Activated T-helper 2 cell treated with anti-CD3 and anti-CD28 coated beads, Interferon-gamma antibody, Interleukin-2, Interleukin-4, amounts not matched to agents 10 μg/mL and 5 μg/mL and 100 μg/mL, durations not matched to agents 14 hours and 24 hours and 36 hours (primary cell): ENCODE measurements at regions of chr10 and their contacts with region 1.

Region 1: DNA sequence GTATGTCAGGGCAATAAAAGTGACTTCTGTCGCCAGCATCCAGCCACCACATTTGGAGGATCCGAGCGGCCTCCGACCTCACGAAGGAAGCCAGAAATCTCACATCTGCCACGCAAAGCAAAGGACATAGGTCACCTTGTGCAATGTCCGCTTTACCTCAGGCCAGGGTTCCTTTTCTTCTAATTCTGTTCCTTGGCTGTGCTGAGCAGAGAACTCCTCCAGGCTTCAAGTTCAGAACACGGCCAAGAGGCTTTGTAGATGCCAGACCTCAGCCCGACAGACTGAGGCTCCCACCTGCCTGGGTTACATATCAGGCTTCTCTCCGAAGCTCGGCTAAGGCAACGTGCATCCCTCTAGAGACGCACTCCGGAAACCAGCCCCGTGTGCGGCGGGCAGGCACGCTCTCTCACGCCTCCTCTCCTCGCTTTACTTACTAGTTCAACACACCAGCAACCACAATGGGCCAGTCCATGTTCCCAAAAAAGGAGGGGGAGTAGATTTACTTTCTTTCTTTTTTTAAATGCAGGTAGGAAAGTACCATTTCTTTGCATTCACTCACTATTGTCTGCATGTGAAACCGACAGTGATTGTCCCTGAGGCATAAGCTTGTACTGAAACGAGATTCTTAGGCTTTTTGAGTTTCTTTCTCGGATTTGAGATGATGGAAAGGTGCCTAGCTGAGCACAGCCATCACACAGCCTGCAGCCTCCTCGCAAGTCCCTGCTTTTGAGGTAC is 122.4 kb upstream of the AFAP1L2 start:
- DNase-seq: peak; percentile 88
- H3K4me3 Mint-ChIP-seq: peak overlapping the region; percentile 83
- H3K27ac Mint-ChIP-seq: peak overlapping the region; percentile 94
- H3K4me1 Mint-ChIP-seq: peaks cover 57% of the 10 kb centered on the region
- H3K27me3 Mint-ChIP-seq: no peaks in the 10 kb centered on the region

Region 2: DNA sequence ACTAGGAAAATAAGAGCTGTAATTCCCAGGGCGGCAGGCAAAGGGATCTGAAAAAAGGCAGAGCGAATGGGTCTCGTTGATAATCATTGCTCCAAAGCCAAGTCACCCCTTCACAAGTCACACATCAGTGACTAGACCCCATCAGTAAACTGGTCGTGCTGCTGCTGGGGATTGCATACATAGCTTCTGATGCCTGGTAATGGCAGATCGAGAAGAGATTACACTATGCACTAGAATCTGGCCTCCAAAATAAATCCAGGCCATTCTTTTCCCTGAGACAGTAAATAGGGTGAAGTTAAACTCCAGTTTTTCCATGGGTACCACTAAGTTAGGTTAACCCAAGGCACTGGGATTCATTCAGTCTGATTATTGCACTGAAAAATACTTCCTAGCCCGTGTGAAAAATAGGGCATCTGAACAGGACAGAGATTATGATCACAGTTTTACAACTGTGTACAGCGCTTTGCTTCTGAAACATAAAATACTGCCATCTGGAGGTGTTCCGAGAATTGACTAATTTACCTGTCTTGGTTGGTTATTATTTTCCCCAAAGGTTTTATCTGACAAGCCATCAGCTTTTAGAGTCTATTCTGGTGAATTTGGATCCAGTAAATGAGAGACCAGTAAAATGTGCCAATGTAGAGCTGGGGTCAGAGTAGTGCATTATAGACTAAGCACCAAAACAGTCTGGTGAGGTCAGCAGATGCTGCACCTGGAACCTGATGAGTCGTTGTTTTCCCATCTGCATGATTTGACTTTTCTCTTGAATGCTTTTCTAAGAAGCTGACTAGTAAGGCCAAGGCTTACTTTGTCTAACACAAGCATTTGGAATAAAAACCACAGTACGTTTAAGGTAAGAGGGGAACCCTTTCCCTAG is 39.5 kb before region 1 on chr10:
- intact Hi-C with region 1: no loop called
- DNase-seq: no peak
- H3K4me3 Mint-ChIP-seq: no peak overlapping the region
- H3K27ac Mint-ChIP-seq: peak overlapping the region; percentile 56
- H3K4me1 Mint-ChIP-seq: peaks cover 20% of the 10 kb centered on the region
- H3K27me3 Mint-ChIP-seq: no peaks in the 10 kb centered on the region

Region 3: GRCh38 chr10:114499630-114500190 is 27.0 kb before region 1 on chr10:
- intact Hi-C with region 1: loop called (anchors 1 kb)
- DNase-seq: peak; percentile 55
- H3K4me3 Mint-ChIP-seq: peak overlapping the region; percentile 53
- H3K27ac Mint-ChIP-seq: peak overlapping the region; percentile 92
- H3K4me1 Mint-ChIP-seq: peaks cover 72% of the 10 kb centered on the region
- H3K27me3 Mint-ChIP-seq: no peaks in the 10 kb centered on the region

Region 4: DNA sequence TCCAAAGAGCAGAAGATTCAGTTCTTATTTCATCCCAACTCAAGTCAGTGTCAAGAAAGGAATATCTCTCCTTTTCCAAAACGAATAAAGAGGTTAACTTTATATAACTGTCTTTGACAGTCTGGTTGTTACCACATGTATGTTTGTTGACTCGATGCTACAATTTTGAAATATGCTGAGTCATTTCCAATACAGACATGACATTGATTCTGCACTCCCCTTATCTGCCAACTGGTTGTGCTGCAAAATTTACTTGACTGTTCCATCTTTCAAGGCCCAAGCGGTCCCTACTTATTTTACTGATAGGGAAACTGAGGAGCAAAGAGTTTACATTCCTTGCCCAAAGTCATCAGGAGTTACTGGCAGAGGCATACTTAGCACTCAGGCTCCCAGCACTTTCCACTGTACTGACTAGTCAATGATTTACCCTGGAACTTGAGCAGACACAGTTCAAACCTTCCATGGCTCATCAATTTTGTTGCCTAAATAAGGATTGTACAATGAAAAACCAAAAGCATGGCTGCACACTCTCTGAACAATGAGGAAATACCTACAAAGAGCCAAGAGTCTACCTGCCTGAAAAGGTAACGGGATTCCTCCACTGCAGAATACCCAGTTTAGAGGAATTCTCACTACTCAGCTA is 78.6 kb after region 1 on chr10:
- intact Hi-C with region 1: no loop called
- DNase-seq: no peak
- H3K4me3 Mint-ChIP-seq: no peak overlapping the region
- H3K27ac Mint-ChIP-seq: no peak overlapping the region
- H3K4me1 Mint-ChIP-seq: peaks cover 42% of the 10 kb centered on the region
- H3K27me3 Mint-ChIP-seq: no peaks in the 10 kb centered on the region

Region 5: DNA sequence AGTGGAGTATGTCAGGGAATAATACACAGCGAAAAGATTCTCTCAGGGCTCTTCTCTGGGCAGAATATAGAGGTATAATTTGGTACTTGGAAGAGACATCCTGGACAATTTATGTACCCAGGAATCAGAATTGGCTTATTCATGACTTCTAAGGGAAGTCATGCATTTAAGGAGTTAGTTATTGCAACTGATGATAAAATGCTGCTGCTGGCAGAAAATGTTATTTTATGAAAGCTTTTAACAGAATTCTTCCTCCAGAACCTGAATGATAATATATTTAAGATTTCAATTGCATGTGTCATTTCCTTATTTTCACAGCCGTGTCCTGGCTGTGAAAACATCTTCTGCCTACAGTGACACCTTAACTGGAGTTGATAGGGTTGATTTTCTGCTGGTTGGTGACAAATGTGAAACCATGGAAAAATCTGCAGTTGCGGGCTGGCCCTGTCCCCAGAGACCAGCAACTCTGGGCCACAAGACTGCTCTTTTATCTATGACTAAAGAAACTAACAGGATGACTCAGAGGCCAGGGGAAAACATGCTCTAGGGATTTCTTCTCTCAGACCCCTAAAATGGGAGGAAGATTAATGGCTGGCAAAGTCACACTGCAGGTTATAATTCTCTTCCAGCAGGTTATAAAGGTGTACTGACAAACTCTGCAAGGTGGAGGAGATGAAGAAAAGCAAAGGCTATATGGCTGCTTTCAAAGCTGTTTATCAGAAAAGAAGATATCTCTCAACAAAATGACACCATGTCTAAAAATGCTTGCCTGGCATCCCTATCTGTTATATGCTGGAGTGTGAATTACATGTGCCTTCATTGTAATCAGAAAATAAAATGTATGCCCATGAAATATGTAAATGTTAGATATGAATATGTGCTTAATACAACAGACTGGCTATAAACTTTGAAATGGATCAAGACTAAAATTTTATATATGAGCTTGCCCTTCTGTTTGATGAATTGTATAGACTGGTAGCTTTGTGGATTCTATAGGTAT is 399.2 kb after region 1 on chr10:
- intact Hi-C with region 1: loop called (anchors 5 kb)
- DNase-seq: peak; percentile 18
- H3K4me3 Mint-ChIP-seq: no peak overlapping the region
- H3K27ac Mint-ChIP-seq: peak overlapping the region; percentile 60
- H3K4me1 Mint-ChIP-seq: peaks cover 22% of the 10 kb centered on the region
- H3K27me3 Mint-ChIP-seq: peaks cover 2% of the 10 kb centered on the region